Activated naive CD4-positive, alpha-beta T cell treated with anti-CD3 and anti-CD28 coated beads for 36 hours (primary cell): ENCODE measurements at regions of chr18 and their contacts with region 1.

Region 1: GRCh38 chr18:79964330-79965118 is at the start of gene HSBP1L1:
- DNase-seq: peak; percentile 78
- H3K4me3 Mint-ChIP-seq: peak within 1 kb of the TSS; percentile 71
- H3K27ac Mint-ChIP-seq: peak within 1 kb of the TSS; percentile 80
- H3K4me1 Mint-ChIP-seq: peaks cover 23% of the 10 kb centered on the region
- H3K27me3 Mint-ChIP-seq: no peaks in the 10 kb centered on the region
- total RNA-seq, gene HSBP1L1: 14.2 to 14.8 TPM

Region 2: DNA sequence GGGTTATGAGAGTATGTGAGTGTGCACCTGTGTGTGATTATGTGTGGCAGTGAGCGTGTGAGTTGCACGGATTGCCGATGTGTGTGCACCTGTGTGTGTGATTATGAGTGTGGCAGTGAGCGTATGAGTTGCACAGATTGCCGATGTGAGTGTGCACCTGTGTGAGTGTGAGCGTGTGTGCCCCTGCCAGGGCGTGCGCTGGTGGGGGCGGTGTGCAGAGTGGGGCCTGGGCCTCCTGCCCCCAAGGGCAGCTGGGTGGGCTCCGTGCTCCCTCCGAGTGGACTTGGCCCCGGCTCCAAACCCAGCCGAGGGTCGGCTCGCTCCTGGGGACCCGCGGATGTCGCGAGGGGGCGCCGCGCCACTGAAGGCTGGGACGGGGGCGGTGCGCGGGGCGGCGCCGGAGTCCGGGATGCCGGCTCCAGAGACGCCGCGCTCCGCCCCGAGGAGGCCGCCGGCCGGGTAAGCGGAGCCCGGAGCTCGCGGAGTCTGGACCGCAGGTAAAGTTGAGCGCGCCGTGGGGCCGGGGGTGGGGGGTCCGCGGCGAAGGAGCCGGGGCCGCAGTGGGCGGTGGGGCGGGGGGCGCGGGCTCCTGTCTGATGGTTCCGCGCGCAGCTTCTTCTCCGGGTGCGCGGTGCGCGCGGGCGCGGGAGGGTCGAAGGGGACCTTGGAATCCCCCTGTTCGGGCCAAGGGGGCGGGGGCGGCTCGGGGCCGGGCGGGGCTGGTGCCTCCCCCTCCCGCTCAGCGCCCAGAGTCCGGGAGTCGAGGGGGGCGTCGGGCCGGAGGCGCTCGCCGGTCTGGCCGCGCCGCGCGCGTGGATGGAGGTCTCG is 166.8 kb before region 1 on chr18 and contains the start of gene KCNG2:
- CTCF ChIA-PET with region 1: no interaction called
- intact Hi-C with region 1: loop called (anchors 5 kb)
- DNase-seq: peak; percentile 51
- H3K4me3 Mint-ChIP-seq: peak within 1 kb of the TSS; percentile 43
- H3K27ac Mint-ChIP-seq: no peak within 1 kb of the TSS
- H3K4me1 Mint-ChIP-seq: peaks cover 10% of the 10 kb centered on the region
- H3K27me3 Mint-ChIP-seq: peaks cover 38% of the 10 kb centered on the region
- total RNA-seq, gene KCNG2: not detected